Mammary epithelial cell (primary cell): ENCODE measurements at regions of chr5 and their contacts with region 1.

Region 1: DNA sequence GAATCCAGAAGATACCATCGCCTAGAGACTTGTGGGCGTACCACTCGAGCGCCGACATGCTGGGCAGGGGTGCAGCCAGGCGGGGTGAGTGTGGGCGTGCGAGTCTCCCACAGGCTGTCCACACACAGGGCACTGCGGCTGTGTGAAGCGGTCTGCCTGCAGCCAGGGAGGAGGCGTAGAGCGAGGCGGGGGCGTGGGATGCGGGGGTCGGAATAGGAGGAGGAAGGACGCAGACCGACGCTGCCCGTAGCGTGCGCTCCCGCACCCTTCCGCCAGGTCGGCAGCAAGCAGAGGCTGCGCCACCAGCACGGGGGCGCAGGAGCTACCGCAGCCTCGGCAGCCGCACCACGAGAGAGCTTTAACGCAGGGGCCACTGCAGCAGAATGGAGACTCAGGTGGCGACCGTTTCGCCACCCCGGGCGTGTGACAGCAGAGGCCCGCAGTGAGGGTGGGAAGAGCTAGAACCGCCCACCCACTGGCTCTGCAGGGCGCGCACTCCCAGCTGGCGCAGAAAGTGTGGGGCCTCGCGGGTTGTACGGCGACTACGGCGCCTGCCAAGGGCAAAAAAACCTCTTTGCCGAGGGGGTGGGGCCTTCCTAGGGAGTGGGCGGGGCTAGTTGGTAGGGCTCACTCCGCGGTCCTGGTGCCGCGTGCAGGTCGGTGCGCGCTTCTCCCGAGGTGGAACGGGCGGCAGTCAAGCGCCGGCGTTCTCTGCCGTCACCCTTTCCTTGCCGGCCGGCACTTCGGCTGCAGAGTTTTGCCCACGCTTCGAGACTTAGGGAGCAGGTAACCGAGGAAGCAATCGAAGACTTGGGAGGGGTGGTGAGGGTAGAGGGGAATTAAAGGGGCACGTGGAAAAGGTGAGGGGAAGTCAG is at the starts of genes MBLAC2 and POLR3G:
- DNase-seq: peak; percentile 90
- H3K4me3 ChIP-seq: peak within 1 kb of the TSS; percentile 68 to 97 (median 84)
- H3K27ac ChIP-seq: peak within 1 kb of the TSS; percentile 44
- H3K4me1 ChIP-seq: peaks cover 4% of the 10 kb centered on the region
- H3K27me3 ChIP-seq: no peaks in the 10 kb centered on the region
- CTCF ChIP-seq: peak; percentile 22 to 56
- total RNA-seq, gene MBLAC2: 7.8 to 8.0 TPM
- total RNA-seq, gene POLR3G: 6.5 to 9.9 TPM

Region 2: GRCh38 chr5:90409318-90410177 is 64.9 kb before region 1 on chr5 and contains the start of gene CETN3:
- CTCF ChIA-PET with region 1: interaction called, 3 read pairs
- dilution Hi-C with region 1: no loop called
- in situ Hi-C with region 1: no loop called
- intact Hi-C with region 1: loop called (anchors 1 kb)
- DNase-seq: peak; percentile 92
- H3K4me3 ChIP-seq: peak within 1 kb of the TSS; percentile 88 to 100 (median 97)
- H3K27ac ChIP-seq: peak within 1 kb of the TSS; percentile 77
- H3K4me1 ChIP-seq: peaks cover 12% of the 10 kb centered on the region
- H3K27me3 ChIP-seq: no peaks in the 10 kb centered on the region
- CTCF ChIP-seq: no peak
- total RNA-seq, gene CETN3: 9.0 to 28.3 TPM

Region 3: DNA sequence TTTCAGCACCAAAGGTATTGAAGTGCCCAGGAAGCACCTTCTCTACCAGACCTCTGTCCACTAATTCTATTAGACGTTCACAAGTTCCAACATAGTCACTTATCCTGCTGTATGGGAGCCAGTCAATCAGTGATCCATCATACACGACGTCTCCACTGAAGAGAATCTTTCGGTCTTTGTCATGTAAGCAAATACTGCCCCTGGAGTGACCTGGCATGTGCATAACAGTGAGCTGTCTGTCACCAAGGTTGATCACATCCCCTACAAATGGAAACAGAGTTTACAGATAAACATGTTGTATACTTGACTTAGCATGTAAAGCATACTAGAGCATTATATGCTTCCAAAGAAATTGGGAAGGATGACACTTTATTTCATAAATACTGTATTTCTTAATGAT is 13.2 kb before region 1 on chr5:
- CTCF ChIA-PET with region 1: no interaction called
- dilution Hi-C with region 1: no loop called
- in situ Hi-C with region 1: no loop called
- intact Hi-C with region 1: loop called (anchors 1 kb)
- DNase-seq: no peak
- H3K4me3 ChIP-seq: no peak overlapping the region
- H3K27ac ChIP-seq: no peak overlapping the region
- H3K4me1 ChIP-seq: no peaks in the 10 kb centered on the region
- H3K27me3 ChIP-seq: no peaks in the 10 kb centered on the region
- CTCF ChIP-seq: no peak

Region 4: DNA sequence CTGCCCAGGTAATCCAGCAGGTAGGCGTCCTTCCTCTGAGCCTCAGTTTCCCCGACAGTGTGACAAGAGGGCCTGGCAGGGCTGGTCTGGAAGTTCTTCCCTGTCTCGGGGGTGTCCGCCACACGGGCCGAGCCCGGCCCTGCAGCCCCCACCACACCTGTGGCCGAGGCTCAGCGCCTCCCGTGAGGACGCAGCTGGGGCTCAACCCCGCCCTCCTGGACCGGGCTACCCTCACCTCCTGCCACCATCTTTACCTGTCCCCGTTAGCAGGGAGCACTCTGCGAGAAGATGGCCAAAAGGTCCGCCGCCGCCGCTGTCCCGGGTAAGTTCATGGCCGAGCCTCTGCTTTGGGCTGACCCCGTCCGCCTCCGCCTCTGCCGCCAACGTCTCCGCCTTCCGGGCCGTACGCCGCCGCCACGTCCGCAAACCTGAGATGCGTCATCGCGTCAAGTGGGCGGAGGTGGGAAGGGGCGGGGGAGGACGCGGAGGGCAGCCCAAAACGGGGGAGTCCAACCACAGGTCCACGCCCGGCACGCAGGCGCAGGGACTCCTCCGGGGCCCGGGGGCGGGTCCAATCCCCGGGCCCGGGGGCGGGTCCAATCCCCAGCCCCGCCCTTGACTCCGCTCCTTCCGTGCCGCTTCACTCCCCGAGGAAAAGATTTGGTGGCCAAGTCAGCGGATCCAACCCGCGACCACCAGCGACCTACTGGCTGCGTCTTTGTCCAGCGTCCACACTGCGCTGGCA is 54.9 kb after region 1 on chr5 and contains the start of gene LYSMD3:
- CTCF ChIA-PET with region 1: no interaction called
- dilution Hi-C with region 1: no loop called
- in situ Hi-C with region 1: no loop called
- intact Hi-C with region 1: loop called (anchors 1 kb)
- DNase-seq: peak; percentile 96
- H3K4me3 ChIP-seq: peak within 1 kb of the TSS; percentile 92 to 98 (median 98)
- H3K27ac ChIP-seq: peak within 1 kb of the TSS; percentile 80
- H3K4me1 ChIP-seq: peaks cover 18% of the 10 kb centered on the region
- H3K27me3 ChIP-seq: peaks cover 3% of the 10 kb centered on the region
- CTCF ChIP-seq: no peak
- total RNA-seq, gene LYSMD3: 16.8 to 18.7 TPM